Activated CD4-positive, alpha-beta T cell treated with anti-CD3 and anti-CD28 coated beads, Interleukin-2, amount 10 ng/mL, durations not matched to agents 7 days and 5 days (primary cell): ENCODE measurements at regions of chr15 and their contacts with region 1.

Region 1: GRCh38 chr15:90320061-90320884 is 31.8 kb upstream of the ZNF774 start:
- DNase-seq: peak; percentile 73
- H3K4me3 Mint-ChIP-seq: no peak overlapping the region
- H3K27ac Mint-ChIP-seq: no peak overlapping the region
- H3K4me1 Mint-ChIP-seq: peaks cover 8% of the 10 kb centered on the region
- H3K27me3 Mint-ChIP-seq: no peaks in the 10 kb centered on the region

Region 2: GRCh38 chr15:90306560-90306959 is 13.7 kb before region 1 on chr15:
- CTCF ChIA-PET with region 1: interaction called, 17 read pairs
- POLR2A ChIA-PET with region 1: no interaction called
- DNase-seq: peak; percentile 44
- H3K4me3 Mint-ChIP-seq: peak overlapping the region; percentile 14
- H3K27ac Mint-ChIP-seq: peak overlapping the region; percentile 80
- H3K4me1 Mint-ChIP-seq: peaks cover 34% of the 10 kb centered on the region
- H3K27me3 Mint-ChIP-seq: peaks cover 3% of the 10 kb centered on the region

Region 3: GRCh38 chr15:90336705-90337141 is 16.4 kb after region 1 on chr15:
- CTCF ChIA-PET with region 1: interaction called, 13 read pairs
- POLR2A ChIA-PET with region 1: no interaction called
- DNase-seq: peak; percentile 37
- H3K4me3 Mint-ChIP-seq: no peak overlapping the region
- H3K27ac Mint-ChIP-seq: peak overlapping the region; percentile 27
- H3K4me1 Mint-ChIP-seq: peaks cover 10% of the 10 kb centered on the region
- H3K27me3 Mint-ChIP-seq: no peaks in the 10 kb centered on the region

Region 4: GRCh38 chr15:90449206-90449735 is 129.0 kb after region 1 on chr15:
- CTCF ChIA-PET with region 1: interaction called, 13 read pairs
- POLR2A ChIA-PET with region 1: no interaction called
- DNase-seq: no peak
- H3K4me3 Mint-ChIP-seq: no peak overlapping the region
- H3K27ac Mint-ChIP-seq: peak overlapping the region; percentile 19
- H3K4me1 Mint-ChIP-seq: peaks cover 1% of the 10 kb centered on the region
- H3K27me3 Mint-ChIP-seq: no peaks in the 10 kb centered on the region

Region 5: DNA sequence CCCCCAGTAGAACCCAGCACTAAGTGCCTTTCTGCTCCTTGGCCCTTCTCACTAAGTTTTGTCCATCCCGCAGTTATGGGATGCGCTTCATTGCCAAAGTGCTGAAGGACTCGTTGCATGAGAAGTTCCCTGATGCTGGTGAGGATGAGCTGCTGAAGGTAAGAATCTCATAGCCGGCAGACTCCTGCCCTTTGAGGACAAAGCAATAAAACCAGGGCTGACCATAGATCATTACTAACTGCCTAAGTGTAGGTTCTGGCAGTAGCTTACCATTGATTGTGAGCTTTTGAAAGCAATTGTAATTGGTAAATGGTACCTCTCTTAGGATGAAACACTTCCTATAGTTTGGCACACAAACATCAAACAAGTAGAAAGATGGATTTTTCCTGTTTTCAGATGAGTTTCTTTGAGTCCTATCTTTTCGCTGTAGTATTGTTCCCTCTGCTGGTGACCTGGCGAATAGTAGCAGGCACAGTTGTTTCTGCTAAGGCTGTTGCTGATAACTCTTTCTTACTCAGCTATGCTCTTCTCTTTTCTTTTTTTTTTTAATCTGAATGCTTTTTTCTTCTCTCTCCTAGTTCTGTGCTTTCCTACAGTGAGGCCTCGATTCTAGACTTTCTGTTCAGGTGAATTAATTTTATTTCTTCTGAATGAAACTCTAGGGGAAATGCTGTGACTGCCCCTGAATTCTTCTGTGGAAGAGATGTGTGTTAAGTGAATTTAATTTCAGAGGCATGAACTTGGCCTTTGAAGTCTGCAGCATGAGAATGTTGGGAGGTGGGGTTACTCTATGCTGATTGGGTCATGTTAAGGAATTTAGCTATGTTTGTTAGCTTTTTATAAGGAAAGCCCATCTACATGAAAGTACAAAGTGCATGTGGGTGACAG is 162.1 kb after region 1 on chr15:
- CTCF ChIA-PET with region 1: interaction called, 25 read pairs
- POLR2A ChIA-PET with region 1: interaction called, 3 read pairs
- DNase-seq: peak; percentile 66
- H3K4me3 Mint-ChIP-seq: no peak overlapping the region
- H3K27ac Mint-ChIP-seq: no peak overlapping the region
- H3K4me1 Mint-ChIP-seq: peaks cover 43% of the 10 kb centered on the region
- H3K27me3 Mint-ChIP-seq: no peaks in the 10 kb centered on the region